ENCODE measurements at regions of chrX and their contacts with region 1.

Region 1: DNA sequence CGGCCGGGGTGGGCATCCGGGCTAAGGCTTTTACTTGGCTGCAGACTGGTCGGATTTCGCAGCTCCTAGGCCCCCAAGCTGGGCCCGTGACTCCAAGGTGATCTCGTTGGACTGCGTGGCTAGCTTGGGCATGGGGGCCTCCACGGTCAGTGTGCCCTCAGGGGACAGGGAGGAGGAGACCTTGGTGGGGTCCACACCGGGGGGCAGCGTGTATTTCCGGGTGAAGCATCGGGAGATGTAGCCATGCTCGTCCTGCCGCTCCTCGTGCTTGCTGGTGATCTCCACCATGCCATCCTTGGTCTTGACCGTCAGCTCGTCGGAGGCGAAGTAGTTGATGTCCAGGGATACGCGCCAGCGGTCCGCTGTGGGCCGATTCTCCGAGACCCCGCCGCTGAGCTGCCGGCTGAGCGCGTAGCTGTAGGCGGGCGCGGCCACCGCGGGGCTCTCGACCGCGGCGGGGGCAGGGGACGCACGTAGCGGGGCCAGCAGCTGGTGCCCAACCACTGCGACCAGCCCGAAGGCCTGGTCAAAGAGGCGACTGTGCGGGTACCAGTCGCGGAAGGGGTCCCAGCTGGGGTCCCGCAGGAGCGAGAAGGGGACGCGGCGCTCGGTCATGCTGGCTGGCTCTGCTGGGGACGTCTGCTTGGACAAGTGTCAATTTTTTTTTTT is 881 bp upstream of the CACNA1F start:
- DNase-seq: no peak
- H3K4me3 ChIP-seq: no peak overlapping the region
- H3K27ac ChIP-seq: no peak overlapping the region
- H3K4me1 ChIP-seq: no peaks in the 10 kb centered on the region
- H3K27me3 ChIP-seq: no peaks in the 10 kb centered on the region
- CTCF ChIP-seq: no peak

Region 2: DNA sequence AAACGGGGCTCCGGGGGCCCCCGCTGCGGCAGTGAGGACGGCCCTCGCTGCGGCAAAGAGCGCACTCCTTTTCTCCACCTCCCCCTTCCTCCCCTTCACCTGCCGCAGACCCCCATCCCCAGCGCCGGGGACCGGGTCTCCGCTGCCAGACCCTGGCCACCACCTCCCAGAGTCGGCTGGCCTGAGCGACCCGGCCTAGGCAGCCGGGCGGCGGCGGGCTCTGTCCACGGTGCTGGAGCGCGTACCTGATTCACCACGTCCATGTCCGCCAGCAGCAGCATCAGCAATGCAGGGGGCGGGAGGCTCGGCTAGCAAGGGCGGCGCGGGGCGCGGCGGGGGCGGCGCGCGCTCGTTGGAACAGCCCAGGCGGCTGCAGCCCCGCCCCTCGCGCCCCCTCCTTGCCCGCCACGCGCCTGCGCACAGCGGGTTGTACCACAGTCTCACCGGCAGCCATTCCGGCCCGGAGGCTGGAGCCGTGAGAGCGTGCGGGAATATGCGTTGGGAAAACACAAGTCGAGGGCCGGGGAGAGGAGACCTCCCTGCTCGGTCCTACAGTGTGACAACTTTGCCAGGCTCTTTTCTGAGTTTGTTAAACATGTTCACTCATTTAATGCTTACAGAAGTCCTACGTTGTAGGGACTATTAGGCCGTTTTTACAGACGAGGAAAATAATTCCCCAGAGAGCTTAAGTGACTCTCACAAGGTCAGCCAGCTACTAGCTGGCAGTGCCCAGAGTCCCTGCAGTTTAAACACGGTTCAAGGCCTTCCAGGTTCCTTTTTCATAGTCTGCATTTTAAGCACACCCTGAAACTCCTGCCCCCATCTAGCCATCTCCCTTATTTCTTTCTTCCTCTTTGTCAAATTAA is 33.9 kb before region 1 on chrX and contains the start of gene SYP:
- CTCF ChIA-PET with region 1: no interaction called
- dilution Hi-C with region 1: no loop called
- in situ Hi-C with region 1: no loop called
- intact Hi-C with region 1: loop called (anchors 2 kb)
- DNase-seq: peak; percentile 74
- H3K4me3 ChIP-seq: peak within 1 kb of the TSS in 1 of 3 experiments; percentile 20
- H3K27ac ChIP-seq: no peak within 1 kb of the TSS
- H3K4me1 ChIP-seq: no peaks in the 10 kb centered on the region
- H3K27me3 ChIP-seq: no peaks in the 10 kb centered on the region
- CTCF ChIP-seq: no peak
- total RNA-seq, gene SYP: 0.49 TPM in 1 of 2 donors, not detected in the other

Measured in mammary epithelial cell (primary cell).